Left cardiac atrium (tissue), 4 donors: ENCODE measurements at regions of chr10 and their contacts with region 1.

Region 1: GRCh38 chr10:91298224-91298871 is 77.9 kb downstream of the PCGF5 start:
- DNase-seq: peak; percentile 74
- ATAC-seq: peak; percentile 91 to 96

Region 2: GRCh38 chr10:90621577-90621976 is 676.8 kb before region 1 on chr10:
- intact Hi-C with region 1: no loop called
- DNase-seq: no peak
- ATAC-seq: no peak

Region 3: GRCh38 chr10:91367127-91367531 is 68.8 kb after region 1 on chr10:
- intact Hi-C with region 1: loop called in 1 of 2 experiments (anchors 2 kb)
- DNase-seq: no peak
- ATAC-seq: peak; percentile 30 to 53

Region 4: DNA sequence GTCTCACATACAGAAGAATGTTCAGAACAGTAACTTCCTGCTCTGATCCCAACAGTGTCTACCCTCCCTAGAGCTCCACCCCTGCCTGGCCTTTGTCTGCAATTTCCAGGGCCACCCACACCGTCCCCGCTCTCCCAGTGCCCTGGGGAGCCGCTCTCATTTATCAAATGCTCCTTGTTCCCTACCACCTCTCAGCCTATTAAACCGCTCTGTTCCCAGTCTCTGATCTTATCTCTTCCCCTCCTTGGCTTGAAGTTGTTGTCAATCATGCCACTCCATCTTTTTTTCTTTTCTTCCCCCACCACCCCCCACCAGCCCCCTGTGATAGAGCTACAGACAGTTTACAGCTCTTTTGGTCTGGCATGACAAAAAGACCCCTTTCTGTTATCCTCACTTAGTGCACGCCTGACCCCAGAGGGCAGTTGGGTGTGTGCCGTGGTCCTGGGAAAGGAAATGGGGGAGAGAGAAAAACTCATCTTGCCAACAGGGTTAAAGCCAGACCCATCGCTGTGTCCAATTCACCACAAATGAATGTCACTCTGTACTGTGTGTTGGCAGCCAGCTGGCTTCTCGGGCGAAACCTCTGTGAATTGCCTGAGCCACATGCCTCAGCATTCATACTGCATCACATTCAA is 83.0 kb after region 1 on chr10:
- intact Hi-C with region 1: loop called in 1 of 2 experiments (anchors 5 kb)
- DNase-seq: peak; percentile 38
- ATAC-seq: peak; percentile 82 to 88

Region 5: GRCh38 chr10:91551856-91552255 is 253.5 kb after region 1 on chr10:
- intact Hi-C with region 1: loop called in 1 of 2 experiments (anchors 5 kb)
- DNase-seq: peak; percentile 50
- ATAC-seq: peak; percentile 87 to 88